Cardiac septum (tissue), 1 donor: ENCODE measurements at regions of chr15 and their contacts with region 1.

Region 1: GRCh38 chr15:88476635-88477060 is 9.1 kb downstream of the MRPS11 start:
- DNase-seq: no peak

Region 2: DNA sequence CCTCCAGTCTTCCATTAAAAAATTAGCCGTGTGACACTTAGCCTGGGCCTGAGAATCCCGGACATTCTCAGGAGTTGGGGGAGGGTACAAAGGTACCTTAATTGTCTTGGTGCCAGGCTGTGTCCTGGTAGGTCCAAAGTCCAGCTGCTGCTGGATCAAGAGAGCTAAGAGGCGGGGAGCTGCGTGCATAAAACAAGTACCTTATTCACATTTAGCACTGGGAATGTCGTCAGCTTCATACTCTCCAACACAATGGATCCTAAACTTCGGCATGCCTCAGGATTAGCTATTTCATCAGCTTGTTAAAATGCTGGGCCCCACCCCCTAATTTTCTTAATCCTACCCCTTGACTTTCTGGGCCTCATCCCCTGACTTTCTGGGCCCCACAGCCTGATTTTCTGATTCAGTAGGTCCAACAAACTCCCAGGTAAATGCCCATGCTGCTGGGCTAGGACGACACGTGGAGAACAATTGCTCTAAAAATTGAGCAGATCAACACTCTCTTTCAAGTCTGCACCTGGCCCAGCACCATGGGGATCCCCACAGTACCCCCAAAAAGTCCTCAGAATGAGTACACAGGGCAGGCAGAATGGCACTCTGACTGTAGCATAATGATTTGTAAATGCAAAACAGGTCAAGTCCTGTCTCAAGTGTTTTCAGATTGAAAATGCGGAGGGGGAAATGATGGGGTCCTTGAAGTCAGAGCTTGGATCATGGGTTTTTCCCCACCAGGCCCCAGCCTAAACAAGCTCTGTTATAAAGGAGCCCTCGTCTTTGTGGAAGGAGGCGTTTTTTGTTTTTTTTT is 138.9 kb after region 1 on chr15:
- intact Hi-C with region 1: loop called (anchors 1 kb)
- DNase-seq: no peak

Region 3: GRCh38 chr15:88674661-88675060 is 198.0 kb after region 1 on chr15:
- intact Hi-C with region 1: no loop called
- DNase-seq: no peak

Region 4: DNA sequence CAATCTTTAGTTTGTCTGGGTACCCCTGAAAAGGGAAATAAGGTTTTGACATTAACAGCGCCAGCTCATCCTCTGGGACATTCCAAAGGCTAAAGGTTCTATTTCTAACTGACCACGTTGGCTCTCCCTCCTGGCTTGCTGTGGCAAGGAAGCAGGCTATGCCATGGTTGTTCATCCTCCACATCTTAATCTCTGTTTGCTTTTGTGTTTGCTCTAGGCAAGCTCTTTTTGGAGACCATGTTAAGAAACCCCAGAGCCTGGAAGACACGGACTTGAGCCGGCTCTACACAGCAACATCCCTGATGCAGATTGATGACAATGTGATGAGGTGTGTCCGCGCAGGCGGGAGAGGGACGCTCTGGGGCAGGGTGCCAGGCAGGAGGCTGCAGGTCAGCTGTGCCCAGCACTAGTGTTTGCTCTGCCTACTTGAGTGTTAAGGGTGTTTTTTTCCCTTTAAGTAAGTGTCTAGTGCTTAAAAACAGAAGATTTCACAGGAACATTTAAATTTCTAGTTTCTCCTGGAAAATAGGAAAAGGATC is 711.4 kb after region 1 on chr15:
- intact Hi-C with region 1: no loop called
- DNase-seq: peak; percentile 24